ENCODE measurements at regions of chr22 and their contacts with region 1.

Region 1: GRCh38 chr22:17213976-17214375 is 5.3 kb downstream of the ADA2 start:
- DNase-seq: peak; percentile 50
- ATAC-seq: no peak
- H3K4me3 ChIP-seq: no peak overlapping the region
- H3K4me3 Mint-ChIP-seq: peak overlapping the region; percentile 19
- H3K27ac ChIP-seq: peak overlapping the region in 1 of 2 donors; percentile 81
- H3K27ac Mint-ChIP-seq: peak overlapping the region; percentile 88
- H3K4me1 ChIP-seq: peaks cover 30 to 40% of the 10 kb centered on the region in 2 donors
- H3K4me1 Mint-ChIP-seq: peaks cover 46% of the 10 kb centered on the region
- H3K27me3 ChIP-seq: no peaks in the 10 kb centered on the region
- H3K27me3 Mint-ChIP-seq: no peaks in the 10 kb centered on the region
- CTCF ChIP-seq: peak; percentile 54

Region 2: DNA sequence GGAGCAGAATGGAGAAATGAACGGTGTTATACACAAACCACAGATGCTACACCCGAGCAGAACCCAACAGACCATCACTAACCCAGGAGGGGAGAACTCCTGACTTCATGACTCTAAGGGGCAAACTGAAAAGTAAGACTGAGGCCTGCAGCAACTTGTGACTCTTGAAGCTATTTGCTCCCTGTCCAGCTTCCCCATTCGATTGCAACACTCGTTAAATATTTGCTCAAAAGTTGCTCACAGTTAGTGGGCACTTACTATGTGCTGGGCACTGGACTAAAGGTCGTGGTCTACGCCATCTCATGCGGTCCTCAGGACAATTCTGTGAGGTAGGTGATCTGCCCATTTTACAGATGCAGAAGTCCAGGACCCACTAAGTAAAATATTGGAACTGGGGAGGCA is 14.8 kb after region 1 on chr22:
- CTCF ChIA-PET with region 1: interaction called, 13 read pairs
- POLR2A ChIA-PET with region 1: interaction called, 11 read pairs
- intact Hi-C with region 1: no loop called
- DNase-seq: peak; percentile 40
- ATAC-seq: peak; percentile 43
- H3K4me3 ChIP-seq: no peak overlapping the region
- H3K4me3 Mint-ChIP-seq: peak overlapping the region; percentile 6
- H3K27ac ChIP-seq: no peak overlapping the region
- H3K27ac Mint-ChIP-seq: peak overlapping the region; percentile 65
- H3K4me1 ChIP-seq: peaks cover 10% of the 10 kb centered on the region in 2 donors
- H3K4me1 Mint-ChIP-seq: peaks cover 17% of the 10 kb centered on the region
- H3K27me3 ChIP-seq: no peaks in the 10 kb centered on the region
- H3K27me3 Mint-ChIP-seq: no peaks in the 10 kb centered on the region
- CTCF ChIP-seq: no peak

Region 3: DNA sequence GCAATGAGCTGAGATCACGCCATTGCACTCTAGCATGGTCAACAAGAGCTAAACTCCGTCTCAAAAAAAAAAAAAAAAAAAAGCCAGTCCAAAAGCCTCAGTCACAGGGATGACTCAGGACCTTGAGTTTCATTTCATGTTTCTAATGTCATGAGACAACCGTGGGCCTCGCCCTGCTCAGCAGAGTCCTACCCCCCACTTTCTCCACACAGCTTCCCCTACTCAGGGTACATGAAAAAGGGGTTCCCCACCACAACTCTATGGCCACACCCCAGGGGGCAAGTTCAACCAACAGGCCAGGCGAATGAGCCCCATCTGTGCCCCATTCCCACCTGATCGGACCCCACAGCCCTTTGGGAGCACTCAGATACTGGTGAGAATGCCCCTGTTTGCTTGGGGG is 29.5 kb after region 1 on chr22:
- CTCF ChIA-PET with region 1: interaction called, 5 read pairs
- POLR2A ChIA-PET with region 1: interaction called, 18 read pairs
- intact Hi-C with region 1: loop called (anchors 1 kb)
- DNase-seq: peak; percentile 82
- ATAC-seq: peak; percentile 97
- H3K4me3 ChIP-seq: no peak overlapping the region
- H3K4me3 Mint-ChIP-seq: peak overlapping the region; percentile 61
- H3K27ac ChIP-seq: peak overlapping the region; percentile 2 to 48
- H3K27ac Mint-ChIP-seq: peak overlapping the region; percentile 89
- H3K4me1 ChIP-seq: peaks cover 14 to 23% of the 10 kb centered on the region in 2 donors
- H3K4me1 Mint-ChIP-seq: peaks cover 24% of the 10 kb centered on the region
- H3K27me3 ChIP-seq: no peaks in the 10 kb centered on the region
- H3K27me3 Mint-ChIP-seq: no peaks in the 10 kb centered on the region
- CTCF ChIP-seq: no peak

Region 4: DNA sequence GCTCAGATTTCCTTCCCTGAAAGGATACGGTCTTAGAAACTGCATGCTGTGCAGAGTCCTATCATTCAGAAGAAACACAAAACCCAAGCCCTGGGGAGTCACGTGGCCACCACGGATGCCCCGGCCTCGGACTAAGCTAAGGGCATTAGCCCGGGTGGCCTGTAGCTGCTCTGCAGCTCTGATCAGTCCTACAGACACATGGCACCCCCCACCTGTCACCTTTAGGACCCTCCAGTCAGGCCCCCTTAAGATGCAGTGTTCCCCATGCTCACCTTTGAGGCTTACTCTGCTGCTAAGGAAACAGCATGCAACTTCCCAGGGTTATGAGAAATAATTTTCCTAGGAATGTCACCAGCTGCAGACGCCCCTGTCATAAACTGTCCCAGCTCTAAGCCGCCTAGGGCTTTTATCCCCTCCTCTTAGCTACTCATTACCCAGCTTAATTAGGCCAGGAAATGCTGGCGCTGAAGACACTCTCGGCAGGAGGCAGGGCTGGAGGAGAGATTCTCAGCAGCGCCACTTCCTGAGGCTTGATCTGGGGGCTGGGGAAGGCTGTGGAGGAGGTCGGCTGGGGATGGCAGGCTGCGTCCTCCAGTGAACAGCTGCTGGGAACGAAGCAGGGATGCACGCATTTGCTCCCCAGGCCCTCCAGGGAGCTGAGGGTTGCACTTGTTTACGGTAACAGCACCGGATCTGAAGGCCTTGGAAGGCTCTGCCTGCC is 52.4 kb after region 1 on chr22:
- CTCF ChIA-PET with region 1: interaction called, 14 read pairs
- POLR2A ChIA-PET with region 1: no interaction called
- intact Hi-C with region 1: no loop called
- DNase-seq: no peak
- ATAC-seq: no peak
- H3K4me3 ChIP-seq: no peak overlapping the region
- H3K4me3 Mint-ChIP-seq: no peak overlapping the region
- H3K27ac ChIP-seq: no peak overlapping the region
- H3K27ac Mint-ChIP-seq: no peak overlapping the region
- H3K4me1 ChIP-seq: peaks cover 0 to 4% of the 10 kb centered on the region in 2 donors
- H3K4me1 Mint-ChIP-seq: peaks cover 6% of the 10 kb centered on the region
- H3K27me3 ChIP-seq: no peaks in the 10 kb centered on the region
- H3K27me3 Mint-ChIP-seq: no peaks in the 10 kb centered on the region
- CTCF ChIP-seq: no peak

Region 5: DNA sequence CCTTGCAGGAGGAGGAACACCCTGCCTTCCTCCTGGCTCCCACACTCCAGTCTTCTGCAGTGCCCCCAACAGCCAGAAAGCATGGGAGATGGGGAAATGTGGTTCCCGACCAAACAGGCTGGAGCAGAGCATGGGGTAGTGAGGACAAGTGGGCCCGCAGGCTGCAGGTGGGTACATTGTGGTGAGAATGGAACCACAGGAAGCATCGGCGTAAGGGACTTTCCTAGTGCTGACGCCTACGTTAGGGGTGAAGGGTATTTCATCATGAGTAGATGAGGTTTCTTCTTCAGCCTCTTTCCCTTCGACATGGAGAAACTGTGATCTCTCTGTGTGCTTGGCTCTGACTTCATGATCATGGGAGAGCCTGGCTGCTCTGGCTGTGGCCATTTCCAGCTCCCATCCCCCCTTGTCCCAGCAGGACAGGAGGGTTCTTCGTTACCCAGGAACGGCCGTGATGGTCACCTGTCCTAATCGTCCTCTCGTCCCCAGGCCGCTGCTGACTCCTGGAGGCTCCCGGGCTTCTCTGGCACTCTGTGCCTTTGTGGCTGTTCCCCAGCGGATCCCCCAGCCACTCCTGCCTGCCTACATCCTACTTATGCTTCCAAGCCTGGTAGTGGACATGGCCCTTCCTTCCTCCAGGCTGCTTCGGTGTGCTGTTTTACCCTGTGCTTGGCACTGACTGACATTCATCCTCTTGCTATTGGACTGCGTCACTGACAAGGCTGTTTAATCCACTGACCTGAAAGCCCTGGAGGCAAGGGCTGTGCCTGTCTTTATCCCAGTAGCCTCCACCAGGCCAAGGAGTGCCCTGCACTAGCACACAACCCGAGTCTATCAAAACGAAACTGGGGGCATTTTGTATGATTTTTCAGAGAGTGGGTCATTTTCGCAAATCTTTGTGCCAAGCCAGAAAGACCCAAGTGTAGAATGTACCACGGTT is 90.1 kb after region 1 on chr22:
- CTCF ChIA-PET with region 1: no interaction called
- POLR2A ChIA-PET with region 1: interaction called, 3 read pairs
- intact Hi-C with region 1: loop called (anchors 1 kb)
- DNase-seq: peak; percentile 87
- ATAC-seq: peak; percentile 94
- H3K4me3 ChIP-seq: peak overlapping the region in 1 of 5 experiments; percentile 31
- H3K4me3 Mint-ChIP-seq: peak overlapping the region; percentile 82
- H3K27ac ChIP-seq: peak overlapping the region; percentile 67 to 77
- H3K27ac Mint-ChIP-seq: peak overlapping the region; percentile 89
- H3K4me1 ChIP-seq: peaks cover 25 to 33% of the 10 kb centered on the region in 2 donors
- H3K4me1 Mint-ChIP-seq: peaks cover 27% of the 10 kb centered on the region
- H3K27me3 ChIP-seq: no peaks in the 10 kb centered on the region
- H3K27me3 Mint-ChIP-seq: no peaks in the 10 kb centered on the region
- CTCF ChIP-seq: no peak

Region 6: DNA sequence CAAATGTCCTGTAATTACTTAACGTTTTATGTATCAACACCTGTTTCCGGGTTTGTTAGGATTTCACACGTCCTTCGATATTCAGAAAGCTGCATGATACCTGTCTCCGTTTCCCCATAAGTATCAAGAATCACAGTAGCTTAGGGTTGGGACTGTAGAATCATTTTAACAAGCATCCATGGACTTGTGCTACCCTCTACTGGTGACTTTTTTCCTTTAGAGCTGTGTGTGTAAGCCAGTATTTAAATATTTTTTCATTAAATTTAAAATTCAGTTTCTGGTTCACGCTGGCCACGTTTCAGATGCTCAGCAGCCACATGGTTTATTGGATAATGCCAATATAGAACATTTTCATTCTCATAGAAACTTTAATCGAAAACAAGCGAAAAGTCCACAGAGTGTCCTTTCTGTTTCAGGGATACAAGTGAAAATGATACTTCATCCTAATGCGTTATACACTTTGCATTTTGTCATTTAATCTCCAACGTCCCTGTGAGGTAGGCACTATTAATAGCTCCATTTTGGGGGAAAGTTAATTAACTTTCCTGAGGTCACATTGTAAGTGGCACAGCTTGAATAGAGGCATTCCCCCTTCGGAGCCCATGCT is 287.8 kb after region 1 on chr22:
- CTCF ChIA-PET with region 1: interaction called, 49 read pairs
- POLR2A ChIA-PET with region 1: interaction called, 3 read pairs
- intact Hi-C with region 1: loop called (anchors 2 kb)
- DNase-seq: peak; percentile 82
- ATAC-seq: peak; percentile 78
- H3K4me3 ChIP-seq: no peak overlapping the region
- H3K4me3 Mint-ChIP-seq: no peak overlapping the region
- H3K27ac ChIP-seq: no peak overlapping the region
- H3K27ac Mint-ChIP-seq: no peak overlapping the region
- H3K4me1 ChIP-seq: peaks cover 0 to 3% of the 10 kb centered on the region in 2 donors
- H3K4me1 Mint-ChIP-seq: peaks cover 4% of the 10 kb centered on the region
- H3K27me3 ChIP-seq: no peaks in the 10 kb centered on the region
- H3K27me3 Mint-ChIP-seq: no peaks in the 10 kb centered on the region
- CTCF ChIP-seq: peak; percentile 91